ENCODE measurements at regions of chr4 and their contacts with region 1.

Region 1: GRCh38 chr4:687048-687970 is 1.6 kb downstream of the SLC49A3 start:
- DNase-seq: peak; percentile 83 to 89
- H3K4me3 ChIP-seq: peak overlapping the region; percentile 24 to 84 (median 57)
- H3K27ac ChIP-seq: peak overlapping the region; percentile 79 to 98
- H3K4me1 ChIP-seq: peaks cover 13 to 16% of the 10 kb centered on the region in 2 donors
- H3K27me3 ChIP-seq: no peaks in the 10 kb centered on the region
- CTCF ChIP-seq: no peak
- POLR2A ChIP-seq: peak; percentile 30

Region 2: GRCh38 chr4:1285790-1286553 is 598.7 kb after region 1 on chr4:
- intact Hi-C with region 1: no loop called
- DNase-seq: no peak
- H3K4me3 ChIP-seq: no peak overlapping the region
- H3K27ac ChIP-seq: no peak overlapping the region
- H3K4me1 ChIP-seq: peaks cover 2 to 4% of the 10 kb centered on the region in 2 donors
- H3K27me3 ChIP-seq: no peaks in the 10 kb centered on the region
- CTCF ChIP-seq: no peak
- POLR2A ChIP-seq: no peak

Region 3: DNA sequence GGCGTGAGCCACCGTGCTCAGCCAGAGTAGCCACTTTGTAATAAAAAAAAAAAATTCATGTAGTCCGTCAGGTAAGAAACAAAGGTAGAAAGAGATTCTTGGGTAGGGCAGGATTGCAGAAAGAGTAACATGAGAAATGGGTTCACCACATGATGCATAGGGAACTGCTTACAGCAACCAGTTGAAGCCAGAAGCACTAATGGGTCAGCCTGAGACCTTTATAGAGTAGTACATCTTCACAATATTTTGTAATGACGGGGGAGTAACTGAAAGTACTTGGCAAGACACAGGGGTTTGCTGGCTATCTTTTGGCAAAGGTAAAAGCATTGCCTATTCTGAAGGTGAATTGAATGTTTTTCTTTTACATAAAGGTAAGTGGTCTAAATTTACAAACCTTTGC is 1878.2 kb after region 1 on chr4:
- intact Hi-C with region 1: loop called (anchors 5 kb)
- DNase-seq: no peak
- H3K4me3 ChIP-seq: no peak overlapping the region
- H3K27ac ChIP-seq: no peak overlapping the region
- H3K4me1 ChIP-seq: no peaks in the 10 kb centered on the region
- H3K27me3 ChIP-seq: no peaks in the 10 kb centered on the region
- CTCF ChIP-seq: no peak
- POLR2A ChIP-seq: no peak